ENCODE measurements at regions of chr22 and their contacts with region 1.

Region 1: GRCh38 chr22:32474635-32475467 is at the start of gene FBXO7:
- DNase-seq: peak; percentile 94
- total RNA-seq, gene FBXO7: 44.8 TPM

Region 2: GRCh38 chr22:32411829-32412592 is 62.8 kb before region 1 on chr22 and contains the start of gene RTCB:
- intact Hi-C with region 1: loop called (anchors 1 kb)
- DNase-seq: peak; percentile 94
- total RNA-seq, gene RTCB: 42.0 TPM